Astrocyte of the cerebellum (primary cell): ENCODE measurements at regions of chr16 and their contacts with region 1.

Region 1: DNA sequence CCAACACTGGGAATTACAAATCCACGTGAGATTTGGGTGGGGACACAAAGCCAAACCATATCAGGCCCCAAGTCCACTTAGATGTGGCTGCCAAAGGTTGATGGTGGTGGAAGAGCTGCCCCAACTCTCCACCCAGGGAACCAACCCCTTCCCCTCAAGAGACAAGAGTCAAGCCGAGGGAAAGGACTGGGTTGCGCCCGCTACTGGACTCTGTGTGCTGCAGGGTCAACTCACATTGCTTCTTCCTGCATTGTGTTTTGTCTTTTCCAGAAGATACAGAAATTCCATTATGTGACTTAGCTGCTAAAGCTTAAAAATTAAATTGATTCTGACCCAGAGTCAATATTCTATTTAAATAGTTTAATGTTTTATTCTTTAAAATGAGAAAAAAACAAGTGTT is 58.5 kb downstream of the ADAMTS18 start:
- DNase-seq: no peak
- H3K4me3 ChIP-seq: no peak overlapping the region
- CTCF ChIP-seq: no peak

Region 2: DNA sequence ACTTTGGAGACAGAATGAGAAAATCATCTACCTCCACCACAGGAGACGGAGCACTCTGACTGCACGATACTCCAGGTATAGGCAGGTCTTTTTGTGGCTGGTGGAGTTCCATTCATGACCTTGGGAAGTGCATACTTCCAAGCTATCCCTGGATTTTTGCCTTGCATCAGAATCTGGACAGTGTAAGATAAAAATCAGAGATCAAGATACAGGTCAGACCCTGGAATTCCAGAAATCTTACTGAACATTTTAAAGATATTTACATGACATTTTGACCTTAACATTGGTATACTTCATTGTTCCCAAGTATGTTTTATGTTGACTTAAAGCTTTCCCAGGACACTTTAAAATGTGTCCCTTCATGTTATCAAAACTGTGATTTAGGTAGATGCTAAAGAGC is 76.1 kb before region 1 on chr16:
- in situ Hi-C with region 1: loop called (anchors 5 kb)
- DNase-seq: no peak
- H3K4me3 ChIP-seq: no peak overlapping the region
- CTCF ChIP-seq: no peak